ENCODE measurements at regions of chr5 and their contacts with region 1.

Region 1: DNA sequence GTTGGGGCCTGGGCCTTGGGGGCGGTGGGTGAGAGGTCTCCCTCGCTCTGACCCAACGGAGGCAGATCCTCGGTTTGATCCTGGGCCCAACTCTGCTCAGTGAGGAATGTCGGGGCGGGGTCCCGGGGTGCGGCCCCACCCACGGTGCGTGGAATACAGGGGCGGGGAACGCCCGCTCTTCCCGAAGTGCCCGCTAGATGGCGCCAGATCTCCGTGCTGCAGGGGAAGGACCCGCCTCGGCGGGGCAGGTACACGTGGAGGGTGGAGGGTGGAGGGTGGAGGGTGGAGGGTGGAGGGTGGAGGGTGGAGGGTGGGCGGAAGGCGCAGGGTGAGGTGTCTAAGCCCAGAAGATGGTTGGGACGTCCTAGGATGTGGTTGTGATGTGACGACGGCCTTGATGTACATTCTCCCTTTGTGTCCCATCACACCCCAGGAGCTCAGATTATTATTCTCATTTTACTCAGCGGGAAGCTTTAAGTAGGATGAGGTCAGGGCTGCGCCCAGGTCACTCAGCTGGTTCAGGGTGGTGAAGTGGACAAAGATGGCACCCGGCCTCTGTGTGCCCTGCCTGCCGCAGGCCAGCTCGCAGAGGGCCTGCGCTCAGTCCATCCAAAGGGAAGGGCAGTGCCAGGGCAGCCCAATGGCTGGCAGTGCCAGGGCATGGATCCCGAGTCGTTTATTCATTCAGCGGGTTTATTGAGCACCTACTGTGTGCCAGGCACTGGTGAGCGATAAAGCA is 9.4 kb upstream of the RPS14 start:
- DNase-seq: peak; percentile 90 to 95
- H3K4me3 ChIP-seq: no peak overlapping the region
- H3K4me3 Mint-ChIP-seq: peak overlapping the region; percentile 25
- H3K27ac Mint-ChIP-seq: peak overlapping the region; percentile 19
- H3K4me1 ChIP-seq: peaks cover 10% of the 10 kb centered on the region
- H3K4me1 Mint-ChIP-seq: peaks cover 15% of the 10 kb centered on the region
- H3K27me3 ChIP-seq: no peaks in the 10 kb centered on the region
- H3K27me3 Mint-ChIP-seq: no peaks in the 10 kb centered on the region
- CTCF ChIP-seq: peak; percentile 86 to 91

Region 2: DNA sequence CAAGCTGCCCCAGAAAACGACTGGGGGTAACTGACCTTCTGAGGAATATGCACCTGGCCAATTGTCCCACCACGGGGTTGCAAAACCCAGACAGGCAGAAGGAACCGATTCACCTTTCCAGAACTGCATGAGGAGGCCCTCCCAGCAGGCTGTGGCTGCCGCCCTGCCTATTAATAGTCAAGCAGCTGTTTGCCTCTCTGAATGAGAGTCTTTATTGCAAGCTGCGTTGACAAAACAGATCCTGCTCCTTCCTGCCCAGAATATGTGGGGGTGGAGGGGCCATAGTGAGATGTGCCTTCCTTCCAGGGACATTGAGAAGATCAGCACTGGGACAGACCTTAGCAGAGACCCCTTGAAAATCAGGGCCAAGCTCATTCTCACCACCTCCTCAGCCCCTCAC is 119.8 kb before region 1 on chr5:
- CTCF ChIA-PET with region 1: no interaction called
- POLR2A ChIA-PET with region 1: no interaction called
- intact Hi-C with region 1: no loop called
- DNase-seq: no peak
- H3K4me3 ChIP-seq: no peak overlapping the region
- H3K4me3 Mint-ChIP-seq: no peak overlapping the region
- H3K27ac Mint-ChIP-seq: no peak overlapping the region
- H3K4me1 ChIP-seq: no peaks in the 10 kb centered on the region
- H3K4me1 Mint-ChIP-seq: peaks cover 7% of the 10 kb centered on the region
- H3K27me3 ChIP-seq: no peaks in the 10 kb centered on the region
- H3K27me3 Mint-ChIP-seq: no peaks in the 10 kb centered on the region
- CTCF ChIP-seq: no peak

Region 3: DNA sequence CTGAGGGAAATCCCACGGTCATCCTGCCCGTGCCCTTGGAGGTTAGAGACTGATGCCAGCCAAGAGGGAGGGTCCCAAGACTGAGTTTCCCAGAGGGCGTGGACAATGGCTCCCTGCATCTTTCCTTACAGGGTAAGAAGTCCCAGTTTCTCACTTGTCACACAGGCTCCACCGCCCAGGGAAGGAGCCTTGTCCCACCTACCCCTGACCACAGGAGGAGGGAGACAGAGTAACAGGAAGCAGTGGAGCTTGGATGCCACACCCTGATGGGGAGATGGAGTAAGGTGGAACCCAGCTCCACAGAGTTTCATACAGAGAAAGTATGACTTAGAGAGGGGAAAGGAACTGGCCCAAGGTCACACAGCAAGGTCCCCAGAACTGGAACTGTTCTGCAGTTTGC is 36.9 kb before region 1 on chr5:
- CTCF ChIA-PET with region 1: no interaction called
- POLR2A ChIA-PET with region 1: no interaction called
- intact Hi-C with region 1: no loop called
- DNase-seq: no peak
- H3K4me3 ChIP-seq: no peak overlapping the region
- H3K4me3 Mint-ChIP-seq: no peak overlapping the region
- H3K27ac Mint-ChIP-seq: peak overlapping the region; percentile 21
- H3K4me1 ChIP-seq: no peaks in the 10 kb centered on the region
- H3K4me1 Mint-ChIP-seq: no peaks in the 10 kb centered on the region
- H3K27me3 ChIP-seq: no peaks in the 10 kb centered on the region
- H3K27me3 Mint-ChIP-seq: no peaks in the 10 kb centered on the region
- CTCF ChIP-seq: no peak

Region 4: DNA sequence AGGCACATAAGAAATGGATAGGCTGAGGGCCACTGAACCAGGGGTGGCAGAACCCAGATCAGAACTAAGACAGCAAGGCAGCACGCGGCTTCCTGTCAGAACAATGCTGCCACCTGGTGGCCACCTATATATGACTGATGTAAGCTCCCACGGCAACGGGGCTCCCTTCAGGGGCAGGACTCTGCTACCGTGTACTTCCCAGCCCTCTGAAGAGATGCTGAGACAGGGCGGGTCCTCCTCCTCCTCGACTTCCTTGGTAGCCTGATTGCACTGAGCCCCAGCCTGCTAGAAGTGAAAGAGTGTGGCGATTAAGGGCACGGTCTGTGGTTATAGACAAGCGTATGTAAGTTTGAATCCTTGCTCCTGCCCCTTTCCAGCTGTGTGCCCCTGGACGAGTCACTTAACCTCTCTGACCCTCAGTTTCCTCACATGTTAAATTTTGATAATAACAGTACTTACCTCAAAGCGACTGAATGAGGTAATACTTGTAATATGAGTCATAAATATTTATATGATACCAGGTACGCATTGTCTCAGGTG is 22.8 kb before region 1 on chr5:
- CTCF ChIA-PET with region 1: no interaction called
- POLR2A ChIA-PET with region 1: no interaction called
- intact Hi-C with region 1: no loop called
- DNase-seq: peak; percentile 89 to 92
- H3K4me3 ChIP-seq: no peak overlapping the region
- H3K4me3 Mint-ChIP-seq: no peak overlapping the region
- H3K27ac Mint-ChIP-seq: no peak overlapping the region
- H3K4me1 ChIP-seq: no peaks in the 10 kb centered on the region
- H3K4me1 Mint-ChIP-seq: no peaks in the 10 kb centered on the region
- H3K27me3 ChIP-seq: no peaks in the 10 kb centered on the region
- H3K27me3 Mint-ChIP-seq: no peaks in the 10 kb centered on the region
- CTCF ChIP-seq: peak; percentile 88 to 90

Region 5: GRCh38 chr5:150491876-150492275 is 32.9 kb after region 1 on chr5:
- CTCF ChIA-PET with region 1: interaction called, 3 read pairs
- POLR2A ChIA-PET with region 1: interaction called, 12 read pairs
- intact Hi-C with region 1: no loop called
- DNase-seq: no peak
- H3K4me3 ChIP-seq: no peak overlapping the region
- H3K4me3 Mint-ChIP-seq: no peak overlapping the region
- H3K27ac Mint-ChIP-seq: peak overlapping the region; percentile 1
- H3K4me1 ChIP-seq: peaks cover 51% of the 10 kb centered on the region
- H3K4me1 Mint-ChIP-seq: peaks cover 54% of the 10 kb centered on the region
- H3K27me3 ChIP-seq: no peaks in the 10 kb centered on the region
- H3K27me3 Mint-ChIP-seq: no peaks in the 10 kb centered on the region
- CTCF ChIP-seq: no peak

Region 6: GRCh38 chr5:150542933-150543445 is 84.0 kb after region 1 on chr5:
- CTCF ChIA-PET with region 1: interaction called, 22 read pairs
- POLR2A ChIA-PET with region 1: no interaction called
- intact Hi-C with region 1: loop called (anchors 1 kb)
- DNase-seq: peak; percentile 86 to 94
- H3K4me3 ChIP-seq: no peak overlapping the region
- H3K4me3 Mint-ChIP-seq: peak overlapping the region; percentile 42
- H3K27ac Mint-ChIP-seq: peak overlapping the region; percentile 81
- H3K4me1 ChIP-seq: peaks cover 34% of the 10 kb centered on the region
- H3K4me1 Mint-ChIP-seq: peaks cover 25% of the 10 kb centered on the region
- H3K27me3 ChIP-seq: no peaks in the 10 kb centered on the region
- H3K27me3 Mint-ChIP-seq: no peaks in the 10 kb centered on the region
- CTCF ChIP-seq: no peak

Region 7: GRCh38 chr5:150640311-150641005 is 181.5 kb after region 1 on chr5 and contains the start of gene SYNPO:
- CTCF ChIA-PET with region 1: no interaction called
- POLR2A ChIA-PET with region 1: no interaction called
- intact Hi-C with region 1: loop called (anchors 5 kb)
- DNase-seq: peak; percentile 56 to 60
- H3K4me3 ChIP-seq: peak within 1 kb of the TSS; percentile 33
- H3K4me3 Mint-ChIP-seq: peak within 1 kb of the TSS; percentile 61
- H3K27ac Mint-ChIP-seq: peak within 1 kb of the TSS; percentile 79
- H3K4me1 ChIP-seq: peaks cover 80% of the 10 kb centered on the region
- H3K4me1 Mint-ChIP-seq: peaks cover 52% of the 10 kb centered on the region
- H3K27me3 ChIP-seq: no peaks in the 10 kb centered on the region
- H3K27me3 Mint-ChIP-seq: no peaks in the 10 kb centered on the region
- CTCF ChIP-seq: no peak
- total RNA-seq, gene SYNPO: 22.4 and 25.1 TPM in 2 replicates